Posterior vena cava (tissue), 2 donors: ENCODE measurements at regions of chr19 and their contacts with region 1.

Region 1: DNA sequence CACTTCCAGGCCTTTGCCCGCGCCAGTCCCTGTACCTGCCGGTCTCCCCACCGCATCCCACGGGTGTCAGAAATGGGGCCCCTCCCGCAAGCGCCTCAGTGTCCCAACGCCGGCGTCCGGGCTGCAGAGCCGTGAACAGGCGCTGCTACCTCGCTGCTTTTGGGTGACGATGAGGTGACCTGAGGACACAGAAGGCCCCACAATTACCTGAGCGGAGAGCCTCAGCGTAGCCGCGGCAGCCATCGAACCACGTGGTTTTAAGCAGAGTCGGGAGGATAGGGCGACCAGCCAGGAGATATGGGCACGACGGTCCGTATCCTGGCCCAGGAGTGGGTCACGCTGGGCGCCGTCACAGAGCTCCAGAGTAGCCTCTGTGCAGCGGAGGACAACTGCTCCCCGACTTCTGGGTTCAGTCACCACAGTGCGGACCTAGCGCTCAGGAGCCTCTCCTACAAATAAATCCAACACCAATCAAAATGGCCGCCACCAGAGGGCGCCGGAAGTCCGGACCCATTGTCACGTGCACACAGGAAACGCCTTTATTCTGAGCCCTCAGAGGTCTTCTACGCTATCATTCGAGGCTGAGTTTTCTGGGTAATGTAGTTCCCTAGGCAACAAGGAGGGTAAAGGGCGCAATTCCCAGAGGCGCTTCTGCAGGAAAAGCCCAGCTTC is at the start of gene ZNF814:
- DNase-seq: peak; percentile 92
- total RNA-seq, gene ZNF814: 10.7 to 13.3 TPM

Region 2: GRCh38 chr19:56423276-56423984 is 1465.3 kb before region 1 on chr19:
- intact Hi-C with region 1: loop called in 1 of 2 experiments (anchors 5 kb)
- DNase-seq: no peak